ENCODE measurements at regions of chr6 and their contacts with region 1.

Region 1: GRCh38 chr6:44074439-44075136 is 52.7 kb downstream of the MRPL14 start:
- DNase-seq: peak; percentile 44 to 78 (median 56)
- H3K4me3 ChIP-seq: peak overlapping the region; percentile 46
- H3K4me3 Mint-ChIP-seq: peak overlapping the region; percentile 77 to 96 (median 86)
- H3K27ac ChIP-seq: peak overlapping the region; percentile 88
- H3K27ac Mint-ChIP-seq: peak overlapping the region in 4 of 8 donors; percentile 7 to 41 (median 24)
- H3K4me1 ChIP-seq: peaks cover 17% of the 10 kb centered on the region
- H3K4me1 Mint-ChIP-seq: peaks cover 17 to 22% (median 18%) of the 10 kb centered on the region in 3 donors
- H3K27me3 ChIP-seq: no peaks in the 10 kb centered on the region
- H3K27me3 Mint-ChIP-seq: peaks cover 12 to 15% of the 10 kb centered on the region in 2 donors

Region 2: GRCh38 chr6:43723737-43724295 is 350.8 kb before region 1 on chr6:
- CTCF ChIA-PET with region 1: interaction called, 32 read pairs
- POLR2A ChIA-PET with region 1: interaction called, 3 read pairs
- DNase-seq: peak; percentile 31 to 76 (median 61)
- H3K4me3 ChIP-seq: no peak overlapping the region
- H3K4me3 Mint-ChIP-seq: peak overlapping the region in 2 of 7 donors; percentile 12 to 16
- H3K27ac ChIP-seq: no peak overlapping the region
- H3K27ac Mint-ChIP-seq: peak overlapping the region in 5 of 8 donors; percentile 0 to 93 (median 80)
- H3K4me1 ChIP-seq: peaks cover 26% of the 10 kb centered on the region
- H3K4me1 Mint-ChIP-seq: peaks cover 23 to 33% (median 28%) of the 10 kb centered on the region in 3 donors
- H3K27me3 ChIP-seq: no peaks in the 10 kb centered on the region
- H3K27me3 Mint-ChIP-seq: peaks cover 1 to 3% of the 10 kb centered on the region in 2 donors

Region 3: GRCh38 chr6:43774776-43775534 is 299.6 kb before region 1 on chr6:
- CTCF ChIA-PET with region 1: interaction called, 72 read pairs
- POLR2A ChIA-PET with region 1: interaction called, 11 read pairs
- DNase-seq: peak; percentile 24 to 61 (median 48)
- H3K4me3 ChIP-seq: no peak overlapping the region
- H3K4me3 Mint-ChIP-seq: no peak overlapping the region
- H3K27ac ChIP-seq: peak overlapping the region; percentile 92
- H3K27ac Mint-ChIP-seq: no peak overlapping the region
- H3K4me1 ChIP-seq: peaks cover 9% of the 10 kb centered on the region
- H3K4me1 Mint-ChIP-seq: peaks cover 10 to 28% (median 12%) of the 10 kb centered on the region in 3 donors
- H3K27me3 ChIP-seq: peaks cover 25% of the 10 kb centered on the region
- H3K27me3 Mint-ChIP-seq: peaks cover 16 to 28% of the 10 kb centered on the region in 2 donors

Region 4: GRCh38 chr6:43900911-43901732 is 173.5 kb before region 1 on chr6:
- CTCF ChIA-PET with region 1: no interaction called
- POLR2A ChIA-PET with region 1: no interaction called
- DNase-seq: no peak
- H3K4me3 ChIP-seq: no peak overlapping the region
- H3K4me3 Mint-ChIP-seq: no peak overlapping the region
- H3K27ac ChIP-seq: no peak overlapping the region
- H3K27ac Mint-ChIP-seq: no peak overlapping the region
- H3K4me1 ChIP-seq: no peaks in the 10 kb centered on the region
- H3K4me1 Mint-ChIP-seq: no peaks in the 10 kb centered on the region
- H3K27me3 ChIP-seq: no peaks in the 10 kb centered on the region
- H3K27me3 Mint-ChIP-seq: peaks cover 0 to 15% of the 10 kb centered on the region in 2 donors

Region 5: GRCh38 chr6:44052419-44053023 is 22.1 kb before region 1 on chr6:
- CTCF ChIA-PET with region 1: no interaction called
- POLR2A ChIA-PET with region 1: no interaction called
- DNase-seq: peak in 1 of 5 donors; percentile 18
- H3K4me3 ChIP-seq: no peak overlapping the region
- H3K4me3 Mint-ChIP-seq: no peak overlapping the region
- H3K27ac ChIP-seq: no peak overlapping the region
- H3K27ac Mint-ChIP-seq: no peak overlapping the region
- H3K4me1 ChIP-seq: no peaks in the 10 kb centered on the region
- H3K4me1 Mint-ChIP-seq: no peaks in the 10 kb centered on the region
- H3K27me3 ChIP-seq: no peaks in the 10 kb centered on the region
- H3K27me3 Mint-ChIP-seq: peaks cover 8 to 20% of the 10 kb centered on the region in 2 donors

Region 6: GRCh38 chr6:44172731-44173500 is 98.3 kb after region 1 on chr6:
- CTCF ChIA-PET with region 1: no interaction called
- POLR2A ChIA-PET with region 1: no interaction called
- DNase-seq: peak; percentile 48 to 80 (median 63)
- H3K4me3 ChIP-seq: no peak overlapping the region
- H3K4me3 Mint-ChIP-seq: no peak overlapping the region
- H3K27ac ChIP-seq: no peak overlapping the region
- H3K27ac Mint-ChIP-seq: peak overlapping the region in 2 of 8 donors; percentile 1 to 72
- H3K4me1 ChIP-seq: peaks cover 3% of the 10 kb centered on the region
- H3K4me1 Mint-ChIP-seq: peaks cover 8 to 14% (median 11%) of the 10 kb centered on the region in 3 donors
- H3K27me3 ChIP-seq: no peaks in the 10 kb centered on the region
- H3K27me3 Mint-ChIP-seq: peaks cover 10 to 14% of the 10 kb centered on the region in 2 donors